Kidney (tissue), 22 donors: ENCODE measurements at regions of chr17 and their contacts with region 1.

Region 1: GRCh38 chr17:41738077-41738735 is 3.8 kb upstream of the HAP1 start:
- DNase-seq: peak; percentile 91 to 94 (median 91)
- H3K4me3 ChIP-seq: no peak overlapping the region
- H3K27ac ChIP-seq: no peak overlapping the region
- H3K4me1 ChIP-seq: peaks cover 0 to 8% (median 0%) of the 10 kb centered on the region in 3 donors
- H3K27me3 ChIP-seq: peaks cover 5% of the 10 kb centered on the region
- CTCF ChIP-seq: peak; percentile 98

Region 2: GRCh38 chr17:41678907-41679739 is 59.1 kb before region 1 on chr17:
- intact Hi-C with region 1: no loop called
- DNase-seq: peak in 2 of 5 donors; percentile 46 to 62
- H3K4me3 ChIP-seq: peak overlapping the region in 2 of 3 donors; percentile 3 to 43
- H3K27ac ChIP-seq: peak overlapping the region; percentile 83 to 85
- H3K4me1 ChIP-seq: peaks cover 0 to 17% (median 15%) of the 10 kb centered on the region in 3 donors
- H3K27me3 ChIP-seq: no peaks in the 10 kb centered on the region
- CTCF ChIP-seq: peak; percentile 38

Region 3: GRCh38 chr17:41801374-41802271 is 63.4 kb after region 1 on chr17:
- intact Hi-C with region 1: loop called (anchors 5 kb)
- DNase-seq: peak; percentile 93 to 98 (median 96)
- H3K4me3 ChIP-seq: peak overlapping the region in 1 of 3 donors; percentile 46
- H3K27ac ChIP-seq: peak overlapping the region; percentile 90 to 91
- H3K4me1 ChIP-seq: peaks cover 0 to 10% (median 6%) of the 10 kb centered on the region in 3 donors
- H3K27me3 ChIP-seq: no peaks in the 10 kb centered on the region
- CTCF ChIP-seq: peak; percentile 99

Region 4: DNA sequence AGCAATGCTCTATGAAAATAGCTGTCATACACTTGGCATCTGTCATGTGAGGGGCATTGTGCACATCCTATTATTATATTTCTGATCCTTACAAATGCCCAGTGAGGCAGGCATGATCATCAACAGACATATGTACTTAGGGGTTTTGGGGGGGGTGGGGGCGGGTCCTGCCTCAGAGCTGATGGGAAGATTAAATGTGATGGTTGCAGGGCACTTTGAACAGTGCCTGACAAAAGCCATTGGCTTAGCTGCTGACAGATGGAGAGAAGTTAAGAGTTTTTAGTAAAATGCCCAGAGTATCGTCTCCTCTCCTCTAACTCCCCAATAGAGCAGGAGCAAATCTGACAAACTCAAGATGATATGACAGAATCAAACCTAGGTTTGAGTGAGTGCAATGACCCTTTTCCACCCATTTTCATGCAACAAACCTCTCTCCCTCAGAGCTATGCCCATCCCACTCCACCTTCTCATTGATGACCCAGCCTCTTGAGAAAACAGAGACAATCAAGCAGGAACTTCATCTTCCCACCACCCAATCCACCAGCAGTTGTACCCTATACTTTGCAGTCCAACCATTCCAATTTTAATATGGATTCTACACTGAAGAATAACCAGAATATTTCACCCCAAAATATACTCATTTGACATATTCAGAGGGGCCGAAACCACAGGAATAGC is 122.2 kb after region 1 on chr17:
- intact Hi-C with region 1: no loop called
- DNase-seq: no peak
- H3K4me3 ChIP-seq: no peak overlapping the region
- H3K27ac ChIP-seq: no peak overlapping the region
- H3K4me1 ChIP-seq: peaks cover 0 to 15% (median 9%) of the 10 kb centered on the region in 3 donors
- H3K27me3 ChIP-seq: no peaks in the 10 kb centered on the region
- CTCF ChIP-seq: no peak